HEK293 (cell line): ENCODE measurements at regions of chr5 and their contacts with region 1.

Region 1: DNA sequence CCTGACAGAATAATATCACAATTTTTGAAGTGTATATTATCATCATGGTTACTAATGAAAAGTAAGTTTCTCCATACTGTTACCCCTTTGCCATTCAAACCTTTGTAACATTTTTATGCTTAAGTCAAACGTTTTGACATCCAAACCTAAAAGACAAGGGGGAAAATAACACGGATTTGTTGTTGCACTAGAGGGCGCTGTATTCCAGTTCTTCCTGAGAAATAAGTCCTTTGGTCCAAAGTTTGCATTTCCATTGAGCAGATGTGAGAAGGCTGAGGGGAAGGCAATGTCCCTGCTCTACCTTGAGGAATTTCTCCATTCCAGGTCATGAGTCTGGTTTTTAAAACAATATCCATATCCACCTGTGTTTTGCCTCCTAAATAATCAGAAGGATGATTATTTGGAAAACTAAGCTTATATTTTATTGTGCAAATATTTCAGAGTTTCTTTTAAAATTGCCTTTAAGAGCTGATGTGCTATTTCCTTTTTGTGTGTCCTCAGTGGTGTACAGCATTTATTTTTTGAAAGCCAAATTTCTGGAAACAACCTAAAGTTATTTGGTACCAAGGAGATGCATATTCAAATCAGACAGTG is 9.7 kb downstream of the LECT2 start:
- H3K4me3 ChIP-seq: no peak overlapping the region
- H3K27ac ChIP-seq: no peak overlapping the region
- H3K4me1 ChIP-seq: no peaks in the 10 kb centered on the region
- CTCF ChIP-seq: no peak

Region 2: DNA sequence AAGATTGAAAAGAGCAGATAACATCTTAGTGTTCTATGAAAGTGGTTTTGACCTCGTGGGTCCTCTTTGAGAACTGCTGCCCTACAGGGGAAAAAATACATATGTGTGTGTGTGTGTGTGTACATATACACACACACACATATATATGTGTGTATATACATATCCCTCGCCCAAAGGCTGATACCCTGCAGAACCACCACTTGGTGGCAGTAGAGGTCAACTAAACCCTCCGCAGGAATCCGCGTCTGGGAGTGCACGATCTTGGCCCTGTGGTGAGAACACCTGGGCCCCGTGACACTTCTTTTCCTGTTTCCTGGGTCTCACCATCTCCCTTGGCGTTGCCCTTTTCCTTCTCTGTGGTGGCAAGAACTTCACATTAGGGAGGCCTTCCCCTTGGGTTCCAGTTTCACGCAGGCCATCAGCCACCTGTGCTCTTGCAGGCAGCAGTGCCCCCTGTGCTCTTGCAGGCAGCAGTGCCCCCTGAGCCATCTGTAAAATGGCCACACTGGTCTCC is 57.7 kb before region 1 on chr5:
- CTCF ChIA-PET with region 1: interaction called, 13 read pairs
- POLR2A ChIA-PET with region 1: no interaction called
- H3K4me3 ChIP-seq: no peak overlapping the region
- H3K27ac ChIP-seq: no peak overlapping the region
- H3K4me1 ChIP-seq: peaks cover 12% of the 10 kb centered on the region
- CTCF ChIP-seq: peak; percentile 88

Region 3: DNA sequence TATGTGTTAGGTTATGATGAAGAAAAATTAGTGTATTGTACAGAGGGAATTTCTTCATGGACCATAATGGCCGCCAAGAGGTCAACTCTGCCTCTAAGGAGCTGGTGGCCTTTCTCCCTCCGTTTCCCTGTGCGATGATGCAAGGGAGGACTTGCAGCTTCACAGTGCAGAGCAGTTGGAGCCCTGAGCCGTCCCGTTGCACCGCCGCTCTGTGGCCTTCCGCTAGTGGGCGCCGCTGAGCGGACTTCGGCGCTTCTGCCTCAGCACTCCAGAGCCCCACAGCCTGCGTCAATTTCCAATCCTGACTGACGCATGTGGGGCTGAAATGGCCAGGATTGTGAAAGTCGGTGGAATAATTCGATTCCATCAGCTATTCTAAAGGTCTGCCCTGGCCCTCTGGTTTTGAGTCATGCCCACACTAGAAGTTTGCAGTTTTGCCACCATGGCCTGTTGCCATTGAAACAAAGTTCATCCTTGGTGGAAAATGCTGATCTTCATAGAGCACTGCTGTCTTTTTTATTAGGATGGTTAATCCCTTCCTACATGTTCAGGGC is 32.4 kb after region 1 on chr5:
- CTCF ChIA-PET with region 1: interaction called, 10 read pairs
- POLR2A ChIA-PET with region 1: no interaction called
- H3K4me3 ChIP-seq: no peak overlapping the region
- H3K27ac ChIP-seq: no peak overlapping the region
- H3K4me1 ChIP-seq: no peaks in the 10 kb centered on the region
- CTCF ChIP-seq: peak; percentile 67; the same call in 1 of the 2 replicates

Region 4: DNA sequence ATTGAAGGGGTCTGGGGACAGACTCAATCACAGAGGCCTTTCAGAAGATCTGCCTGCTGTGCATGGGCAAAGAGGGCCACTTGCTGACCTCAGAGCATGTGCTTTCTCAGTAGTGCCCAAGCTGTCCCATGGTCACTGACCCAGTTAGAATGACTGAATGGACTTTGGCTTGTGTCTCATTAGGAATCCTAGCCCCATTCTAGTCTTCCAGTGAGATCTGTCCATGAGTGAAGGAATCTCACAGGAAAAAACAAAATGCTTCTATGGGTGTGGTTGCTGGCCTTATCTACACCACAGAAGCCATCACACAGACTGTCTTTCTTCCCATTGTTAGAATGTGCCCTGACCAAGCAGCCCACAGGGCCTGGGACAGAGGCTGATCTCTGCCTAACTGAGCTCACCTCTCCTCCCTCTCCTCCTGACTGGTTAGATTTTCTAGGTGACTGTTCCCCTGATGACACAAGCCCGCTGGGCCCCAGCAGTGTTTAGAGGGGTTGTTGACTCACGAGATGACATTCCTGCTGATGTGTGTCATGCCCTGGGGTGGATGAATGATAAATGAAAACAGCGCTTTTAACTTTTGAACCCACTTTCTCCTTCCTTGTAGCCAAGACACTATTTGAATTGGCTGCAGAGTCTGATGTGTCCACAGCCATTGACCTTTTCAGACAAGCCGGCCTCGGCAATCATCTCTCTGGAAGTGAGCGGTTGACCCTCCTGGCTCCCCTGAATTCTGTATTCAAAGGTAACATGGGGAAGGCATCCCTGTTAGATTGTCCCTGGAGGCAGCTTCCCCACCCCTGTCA is 108.5 kb after region 1 on chr5:
- CTCF ChIA-PET with region 1: interaction called, 24 read pairs
- POLR2A ChIA-PET with region 1: interaction called, 3 read pairs
- H3K4me3 ChIP-seq: no peak overlapping the region
- H3K27ac ChIP-seq: no peak overlapping the region
- H3K4me1 ChIP-seq: peaks cover 15% of the 10 kb centered on the region
- CTCF ChIP-seq: no peak

Region 5: GRCh38 chr5:136080483-136081216 is 135.6 kb after region 1 on chr5:
- CTCF ChIA-PET with region 1: interaction called, 16 read pairs
- POLR2A ChIA-PET with region 1: interaction called, 3 read pairs
- H3K4me3 ChIP-seq: peak overlapping the region; percentile 44
- H3K27ac ChIP-seq: peak overlapping the region; percentile 43; the same call in 1 of the 2 replicates
- H3K4me1 ChIP-seq: peaks cover 3% of the 10 kb centered on the region; the same call in 1 of the 2 replicates
- CTCF ChIP-seq: no peak

Region 6: DNA sequence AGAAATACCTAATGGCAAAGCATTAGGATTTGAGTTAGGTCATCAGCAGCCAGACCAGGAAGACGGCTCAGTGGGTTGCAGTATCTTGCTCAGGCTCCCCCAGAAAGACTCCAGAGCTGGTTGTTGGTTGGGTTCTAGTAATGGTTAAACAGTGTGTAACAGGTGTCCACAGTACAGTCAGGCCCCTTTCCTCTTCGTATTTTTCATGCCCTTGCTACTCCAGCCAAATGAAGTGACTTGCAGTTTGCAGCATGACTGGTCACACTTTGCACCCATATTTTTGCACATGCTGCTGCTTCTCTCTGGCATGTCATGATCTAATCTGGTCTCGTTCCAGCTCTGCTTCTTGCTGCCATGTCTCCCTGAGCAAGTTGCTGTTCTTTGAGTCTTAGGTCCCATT is 480.9 kb after region 1 on chr5:
- CTCF ChIA-PET with region 1: no interaction called
- POLR2A ChIA-PET with region 1: no interaction called
- H3K4me3 ChIP-seq: no peak overlapping the region
- H3K27ac ChIP-seq: no peak overlapping the region
- H3K4me1 ChIP-seq: peaks cover 13% of the 10 kb centered on the region
- CTCF ChIP-seq: no peak